ENCODE measurements at regions of chr20 and their contacts with region 1.

Region 1: GRCh38 chr20:45138561-45139300 is 14.5 kb upstream of the WFDC12 start:
- DNase-seq: peak; percentile 74
- H3K4me3 Mint-ChIP-seq: no peak overlapping the region
- H3K27ac Mint-ChIP-seq: no peak overlapping the region
- H3K4me1 Mint-ChIP-seq: no peaks in the 10 kb centered on the region
- H3K27me3 Mint-ChIP-seq: no peaks in the 10 kb centered on the region
- CTCF ChIP-seq: peak; percentile 85

Region 2: DNA sequence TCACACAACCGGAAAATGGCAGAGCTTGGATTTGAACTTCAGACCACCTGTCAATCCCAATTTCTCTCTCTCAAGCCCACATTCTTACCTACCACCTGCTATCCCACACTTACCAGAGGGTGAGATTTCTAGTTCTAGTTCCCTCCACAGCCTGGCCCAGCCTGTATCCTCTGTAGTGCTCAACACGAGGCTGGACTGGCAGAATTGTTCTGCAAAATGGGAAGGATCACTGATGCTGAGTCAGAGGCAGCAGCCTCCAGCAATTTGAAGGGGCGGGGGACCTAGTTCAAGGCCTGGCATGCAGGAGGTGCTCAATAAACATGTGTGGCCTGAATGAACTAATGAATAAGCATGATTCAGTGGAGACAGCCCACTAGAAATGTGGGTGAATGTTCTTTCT is 716.6 kb before region 1 on chr20:
- CTCF ChIA-PET with region 1: no interaction called
- POLR2A ChIA-PET with region 1: no interaction called
- intact Hi-C with region 1: no loop called
- DNase-seq: peak; percentile 64
- H3K4me3 Mint-ChIP-seq: no peak overlapping the region
- H3K27ac Mint-ChIP-seq: no peak overlapping the region
- H3K4me1 Mint-ChIP-seq: peaks cover 6% of the 10 kb centered on the region
- H3K27me3 Mint-ChIP-seq: no peaks in the 10 kb centered on the region
- CTCF ChIP-seq: no peak

Region 3: DNA sequence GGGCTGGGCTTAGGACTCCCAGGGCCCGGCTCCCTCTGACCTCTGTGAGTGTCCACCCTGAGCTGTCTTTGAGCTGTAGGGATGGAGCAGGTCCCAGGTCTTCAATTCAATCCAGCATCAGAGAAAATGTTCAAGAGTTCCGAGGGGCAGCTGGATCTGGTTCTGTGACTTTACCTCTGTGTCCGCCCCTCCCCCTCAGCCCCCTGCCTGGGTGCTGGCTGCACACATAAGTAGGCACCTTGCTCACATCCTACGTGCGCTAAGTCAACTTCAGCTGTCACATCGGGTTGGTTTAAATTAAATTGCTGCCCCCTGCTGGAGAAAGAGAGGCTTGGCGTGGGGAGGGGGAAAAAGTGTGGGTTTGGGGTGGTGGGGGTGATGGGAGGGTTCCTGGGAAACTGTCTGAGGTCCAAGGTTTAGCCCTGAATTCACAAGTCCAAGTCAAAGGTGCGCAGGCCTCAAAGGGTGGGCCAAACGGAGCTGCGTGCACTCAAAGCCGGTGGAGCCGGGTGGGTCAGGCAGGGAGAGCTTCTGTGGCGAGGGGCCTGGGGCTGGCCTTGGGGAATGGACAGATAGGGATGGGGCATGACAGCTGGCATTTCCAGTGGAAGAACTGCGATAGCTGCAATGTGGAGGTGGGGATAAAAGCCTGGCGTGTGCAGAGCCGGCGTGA is 26.8 kb before region 1 on chr20:
- CTCF ChIA-PET with region 1: interaction called, 29 read pairs
- POLR2A ChIA-PET with region 1: no interaction called
- intact Hi-C with region 1: no loop called
- DNase-seq: peak; percentile 50
- H3K4me3 Mint-ChIP-seq: no peak overlapping the region
- H3K27ac Mint-ChIP-seq: no peak overlapping the region
- H3K4me1 Mint-ChIP-seq: no peaks in the 10 kb centered on the region
- H3K27me3 Mint-ChIP-seq: peaks cover 10% of the 10 kb centered on the region
- CTCF ChIP-seq: peak; percentile 64

Region 4: GRCh38 chr20:45117581-45117980 is 21.1 kb before region 1 on chr20:
- CTCF ChIA-PET with region 1: interaction called, 29 read pairs
- POLR2A ChIA-PET with region 1: interaction called, 3 read pairs
- intact Hi-C with region 1: no loop called
- DNase-seq: no peak
- H3K4me3 Mint-ChIP-seq: no peak overlapping the region
- H3K27ac Mint-ChIP-seq: no peak overlapping the region
- H3K4me1 Mint-ChIP-seq: no peaks in the 10 kb centered on the region
- H3K27me3 Mint-ChIP-seq: peaks cover 26% of the 10 kb centered on the region
- CTCF ChIP-seq: no peak

Region 5: DNA sequence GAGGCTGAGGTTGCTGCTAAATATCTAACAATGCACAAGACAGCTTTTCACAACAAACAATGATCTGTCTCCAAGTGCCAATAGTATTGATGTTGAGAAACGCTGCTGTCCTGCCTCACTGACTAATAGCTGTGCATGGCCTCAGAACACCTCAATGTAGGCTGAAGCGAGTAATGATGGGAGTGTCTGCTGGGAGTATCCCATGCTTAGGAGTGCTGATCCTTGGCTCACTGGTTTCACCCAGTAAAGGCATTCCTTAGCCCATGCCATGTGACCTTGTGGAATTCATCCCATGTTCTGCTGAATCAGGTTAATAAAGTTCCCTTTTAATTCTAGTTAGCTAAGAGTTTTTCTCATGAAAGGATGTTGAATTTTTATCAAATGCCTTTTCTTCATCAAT is 10.7 kb before region 1 on chr20:
- CTCF ChIA-PET with region 1: interaction called, 36 read pairs
- POLR2A ChIA-PET with region 1: interaction called, 14 read pairs
- intact Hi-C with region 1: no loop called
- DNase-seq: peak; percentile 27
- H3K4me3 Mint-ChIP-seq: no peak overlapping the region
- H3K27ac Mint-ChIP-seq: no peak overlapping the region
- H3K4me1 Mint-ChIP-seq: no peaks in the 10 kb centered on the region
- H3K27me3 Mint-ChIP-seq: peaks cover 20% of the 10 kb centered on the region
- CTCF ChIP-seq: no peak

Region 6: DNA sequence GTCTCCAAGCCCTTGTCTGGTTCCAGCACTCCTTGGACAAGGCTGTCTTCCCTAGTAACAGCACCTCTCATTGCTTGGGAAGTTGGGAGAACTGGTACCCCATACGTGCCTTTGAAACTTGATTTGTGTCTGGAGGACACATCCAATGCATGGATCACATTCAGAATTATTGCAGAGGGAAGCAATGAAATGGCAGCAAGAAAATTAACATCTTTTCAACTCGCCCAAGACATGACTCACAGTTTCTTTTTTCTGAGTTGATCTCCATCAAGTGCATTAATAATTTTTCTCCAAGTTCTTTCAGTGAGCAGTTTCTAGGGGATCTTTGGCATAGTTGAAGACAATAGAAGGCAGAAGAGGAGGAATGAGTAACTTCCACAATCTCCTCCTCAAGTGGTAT is 13.7 kb after region 1 on chr20:
- CTCF ChIA-PET with region 1: interaction called, 14 read pairs
- POLR2A ChIA-PET with region 1: interaction called, 3 read pairs
- intact Hi-C with region 1: no loop called
- DNase-seq: no peak
- H3K4me3 Mint-ChIP-seq: no peak overlapping the region
- H3K27ac Mint-ChIP-seq: no peak overlapping the region
- H3K4me1 Mint-ChIP-seq: no peaks in the 10 kb centered on the region
- H3K27me3 Mint-ChIP-seq: peaks cover 39% of the 10 kb centered on the region
- CTCF ChIP-seq: no peak

Region 7: GRCh38 chr20:45157962-45158361 is 19.2 kb after region 1 on chr20:
- CTCF ChIA-PET with region 1: interaction called, 13 read pairs
- POLR2A ChIA-PET with region 1: interaction called, 3 read pairs
- intact Hi-C with region 1: no loop called
- DNase-seq: peak; percentile 95
- H3K4me3 Mint-ChIP-seq: no peak overlapping the region
- H3K27ac Mint-ChIP-seq: peak overlapping the region; percentile 47
- H3K4me1 Mint-ChIP-seq: peaks cover 11% of the 10 kb centered on the region
- H3K27me3 Mint-ChIP-seq: no peaks in the 10 kb centered on the region
- CTCF ChIP-seq: no peak

Measured in MCF 10A (cell line).